ENCODE measurements at regions of chr17 and their contacts with region 1.

Region 1: GRCh38 chr17:68457539-68458259 is 403 bp upstream of the WIPI1 start:
- DNase-seq: peak; percentile 99
- ATAC-seq: peak; percentile 57 to 63
- H3K4me3 ChIP-seq: peak overlapping the region; percentile 57 to 97 (median 62)
- H3K27ac ChIP-seq: peak overlapping the region; percentile 91 to 100 (median 94)
- H3K4me1 ChIP-seq: peaks cover 71 to 78% of the 10 kb centered on the region in 2 donors
- H3K27me3 ChIP-seq: no peaks in the 10 kb centered on the region
- CTCF ChIP-seq: peak in 2 of 5 experiments; percentile 16 to 17
- POLR2A ChIP-seq: peak; percentile 96 to 99

Region 2: GRCh38 chr17:68172461-68172954 is 285.2 kb before region 1 on chr17:
- in situ Hi-C with region 1: loop called in 3 of 4 experiments (anchors 10 kb)
- intact Hi-C with region 1: no loop called
- DNase-seq: peak in 1 of 2 donors; percentile 64
- ATAC-seq: peak; percentile 67 to 87
- H3K4me3 ChIP-seq: no peak overlapping the region
- H3K27ac ChIP-seq: no peak overlapping the region
- H3K4me1 ChIP-seq: no peaks in the 10 kb centered on the region
- H3K27me3 ChIP-seq: no peaks in the 10 kb centered on the region
- CTCF ChIP-seq: peak; percentile 89 to 98 (median 96)
- POLR2A ChIP-seq: no peak

Region 3: GRCh38 chr17:68255731-68256538 is 201.8 kb before region 1 on chr17:
- in situ Hi-C with region 1: loop called in 1 of 4 experiments (anchors 10 kb)
- intact Hi-C with region 1: no loop called
- DNase-seq: no peak
- ATAC-seq: no peak
- H3K4me3 ChIP-seq: no peak overlapping the region
- H3K27ac ChIP-seq: no peak overlapping the region
- H3K4me1 ChIP-seq: peaks cover 0 to 7% of the 10 kb centered on the region in 2 donors
- H3K27me3 ChIP-seq: no peaks in the 10 kb centered on the region
- CTCF ChIP-seq: no peak
- POLR2A ChIP-seq: no peak

Region 4: GRCh38 chr17:68377862-68378770 is 79.6 kb before region 1 on chr17:
- in situ Hi-C with region 1: no loop called
- intact Hi-C with region 1: loop called (anchors 1 kb)
- DNase-seq: peak; percentile 100
- ATAC-seq: peak; percentile 82 to 88
- H3K4me3 ChIP-seq: peak overlapping the region; percentile 17 to 37 (median 22)
- H3K27ac ChIP-seq: peak overlapping the region; percentile 93 to 98 (median 96)
- H3K4me1 ChIP-seq: peaks cover 41 to 42% of the 10 kb centered on the region in 2 donors
- H3K27me3 ChIP-seq: no peaks in the 10 kb centered on the region
- CTCF ChIP-seq: no peak
- POLR2A ChIP-seq: peak; percentile 56 to 76

Region 5: GRCh38 chr17:68497885-68498319 is 40.2 kb after region 1 on chr17:
- in situ Hi-C with region 1: no loop called
- intact Hi-C with region 1: no loop called
- DNase-seq: no peak
- ATAC-seq: no peak
- H3K4me3 ChIP-seq: no peak overlapping the region
- H3K27ac ChIP-seq: no peak overlapping the region
- H3K4me1 ChIP-seq: peaks cover 0 to 6% of the 10 kb centered on the region in 2 donors
- H3K27me3 ChIP-seq: no peaks in the 10 kb centered on the region
- CTCF ChIP-seq: no peak
- POLR2A ChIP-seq: no peak

Region 6: GRCh38 chr17:68512247-68512982 is 54.7 kb after region 1 on chr17 and contains the start of gene PRKAR1A:
- in situ Hi-C with region 1: loop called in 1 of 4 experiments (anchors 10 kb)
- intact Hi-C with region 1: loop called (anchors 2 kb)
- DNase-seq: peak; percentile 92 to 94
- ATAC-seq: peak; percentile 73 to 81
- H3K4me3 ChIP-seq: peak within 1 kb of the TSS; percentile 78 to 89 (median 84)
- H3K27ac ChIP-seq: peak within 1 kb of the TSS; percentile 94 to 99 (median 96)
- H3K4me1 ChIP-seq: peaks cover 48 to 55% of the 10 kb centered on the region in 2 donors
- H3K27me3 ChIP-seq: no peaks in the 10 kb centered on the region
- CTCF ChIP-seq: peak in 2 of 5 experiments; percentile 17 to 18
- POLR2A ChIP-seq: peak; percentile 96 to 97
- total RNA-seq, gene PRKAR1A: 271 to 656 (median 557) TPM

Measured in gastrocnemius medialis (tissue), 4 donors.